CD4-positive, alpha-beta T cell (primary cell): ENCODE measurements at regions of chr7 and their contacts with region 1.

Region 1: GRCh38 chr7:35801392-35802101 is 690 bp downstream of the SEPTIN7 start:
- DNase-seq: peak; percentile 56 to 91 (median 72)
- ATAC-seq: peak; percentile 35
- H3K4me3 ChIP-seq: peak overlapping the region; percentile 84
- H3K4me3 Mint-ChIP-seq: peak overlapping the region; percentile 94
- H3K27ac ChIP-seq: peak overlapping the region; percentile 94 to 99
- H3K27ac Mint-ChIP-seq: peak overlapping the region; percentile 98
- H3K4me1 ChIP-seq: peaks cover 21% of the 10 kb centered on the region
- H3K4me1 Mint-ChIP-seq: peaks cover 55% of the 10 kb centered on the region
- H3K27me3 ChIP-seq: no peaks in the 10 kb centered on the region
- H3K27me3 Mint-ChIP-seq: no peaks in the 10 kb centered on the region
- CTCF ChIP-seq: peak; percentile 41

Region 2: GRCh38 chr7:35707422-35707821 is 94.1 kb before region 1 on chr7:
- CTCF ChIA-PET with region 1: interaction called, 8 read pairs
- POLR2A ChIA-PET with region 1: interaction called, 50 read pairs
- intact Hi-C with region 1: loop called (anchors 1 to 5 kb)
- DNase-seq: no peak
- ATAC-seq: no peak
- H3K4me3 ChIP-seq: no peak overlapping the region
- H3K4me3 Mint-ChIP-seq: no peak overlapping the region
- H3K27ac ChIP-seq: no peak overlapping the region
- H3K27ac Mint-ChIP-seq: no peak overlapping the region
- H3K4me1 ChIP-seq: peaks cover 13% of the 10 kb centered on the region
- H3K4me1 Mint-ChIP-seq: peaks cover 12% of the 10 kb centered on the region
- H3K27me3 ChIP-seq: no peaks in the 10 kb centered on the region
- H3K27me3 Mint-ChIP-seq: no peaks in the 10 kb centered on the region
- CTCF ChIP-seq: no peak

Region 3: GRCh38 chr7:35823440-35823839 is 21.9 kb after region 1 on chr7:
- CTCF ChIA-PET with region 1: interaction called, 7 read pairs
- POLR2A ChIA-PET with region 1: interaction called, 19 read pairs
- intact Hi-C with region 1: no loop called
- DNase-seq: no peak
- ATAC-seq: no peak
- H3K4me3 ChIP-seq: no peak overlapping the region
- H3K4me3 Mint-ChIP-seq: peak overlapping the region; percentile 32
- H3K27ac ChIP-seq: no peak overlapping the region
- H3K27ac Mint-ChIP-seq: no peak overlapping the region
- H3K4me1 ChIP-seq: peaks cover 8% of the 10 kb centered on the region
- H3K4me1 Mint-ChIP-seq: peaks cover 39% of the 10 kb centered on the region
- H3K27me3 ChIP-seq: no peaks in the 10 kb centered on the region
- H3K27me3 Mint-ChIP-seq: no peaks in the 10 kb centered on the region
- CTCF ChIP-seq: no peak

Region 4: DNA sequence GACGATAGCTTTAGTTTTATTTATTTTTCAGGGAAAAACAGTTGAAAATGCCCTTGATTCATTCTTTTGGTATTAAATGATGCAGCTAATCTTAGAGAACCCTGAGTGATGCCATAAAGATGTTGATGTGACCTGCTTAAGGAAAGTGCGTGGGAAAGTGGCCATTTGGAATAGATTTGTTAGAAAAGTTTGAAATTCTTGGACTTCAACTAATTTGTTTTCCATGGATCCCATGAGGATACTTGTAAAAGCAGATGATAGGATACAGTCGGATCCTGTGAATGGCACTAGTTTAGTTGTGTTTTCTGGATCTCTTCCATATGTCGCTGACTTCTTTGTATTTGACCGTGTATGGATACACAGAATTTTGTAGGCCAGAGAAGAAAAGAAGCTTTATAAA is 68.3 kb after region 1 on chr7:
- CTCF ChIA-PET with region 1: interaction called, 4 read pairs
- POLR2A ChIA-PET with region 1: interaction called, 3 read pairs
- intact Hi-C with region 1: loop called in 1 of 2 experiments (anchors 5 kb)
- DNase-seq: no peak
- ATAC-seq: no peak
- H3K4me3 ChIP-seq: no peak overlapping the region
- H3K4me3 Mint-ChIP-seq: no peak overlapping the region
- H3K27ac ChIP-seq: no peak overlapping the region
- H3K27ac Mint-ChIP-seq: no peak overlapping the region
- H3K4me1 ChIP-seq: no peaks in the 10 kb centered on the region
- H3K4me1 Mint-ChIP-seq: peaks cover 60% of the 10 kb centered on the region
- H3K27me3 ChIP-seq: no peaks in the 10 kb centered on the region
- H3K27me3 Mint-ChIP-seq: no peaks in the 10 kb centered on the region
- CTCF ChIP-seq: no peak

Region 5: GRCh38 chr7:35993676-35994606 is 192.4 kb after region 1 on chr7:
- CTCF ChIA-PET with region 1: no interaction called
- POLR2A ChIA-PET with region 1: no interaction called
- intact Hi-C with region 1: no loop called
- DNase-seq: no peak
- ATAC-seq: no peak
- H3K4me3 ChIP-seq: no peak overlapping the region
- H3K4me3 Mint-ChIP-seq: no peak overlapping the region
- H3K27ac ChIP-seq: no peak overlapping the region
- H3K27ac Mint-ChIP-seq: no peak overlapping the region
- H3K4me1 ChIP-seq: no peaks in the 10 kb centered on the region
- H3K4me1 Mint-ChIP-seq: no peaks in the 10 kb centered on the region
- H3K27me3 ChIP-seq: no peaks in the 10 kb centered on the region
- H3K27me3 Mint-ChIP-seq: no peaks in the 10 kb centered on the region
- CTCF ChIP-seq: no peak

Region 6: GRCh38 chr7:36291387-36292316 is 490.1 kb after region 1 on chr7:
- CTCF ChIA-PET with region 1: no interaction called
- POLR2A ChIA-PET with region 1: interaction called, 11 read pairs
- intact Hi-C with region 1: no loop called
- DNase-seq: peak; percentile 56 to 88 (median 70)
- ATAC-seq: peak; percentile 27
- H3K4me3 ChIP-seq: peak overlapping the region; percentile 26
- H3K4me3 Mint-ChIP-seq: peak overlapping the region; percentile 65
- H3K27ac ChIP-seq: no peak overlapping the region
- H3K27ac Mint-ChIP-seq: peak overlapping the region; percentile 59
- H3K4me1 ChIP-seq: peaks cover 45% of the 10 kb centered on the region
- H3K4me1 Mint-ChIP-seq: peaks cover 46% of the 10 kb centered on the region
- H3K27me3 ChIP-seq: no peaks in the 10 kb centered on the region
- H3K27me3 Mint-ChIP-seq: no peaks in the 10 kb centered on the region
- CTCF ChIP-seq: peak; percentile 96

Region 7: DNA sequence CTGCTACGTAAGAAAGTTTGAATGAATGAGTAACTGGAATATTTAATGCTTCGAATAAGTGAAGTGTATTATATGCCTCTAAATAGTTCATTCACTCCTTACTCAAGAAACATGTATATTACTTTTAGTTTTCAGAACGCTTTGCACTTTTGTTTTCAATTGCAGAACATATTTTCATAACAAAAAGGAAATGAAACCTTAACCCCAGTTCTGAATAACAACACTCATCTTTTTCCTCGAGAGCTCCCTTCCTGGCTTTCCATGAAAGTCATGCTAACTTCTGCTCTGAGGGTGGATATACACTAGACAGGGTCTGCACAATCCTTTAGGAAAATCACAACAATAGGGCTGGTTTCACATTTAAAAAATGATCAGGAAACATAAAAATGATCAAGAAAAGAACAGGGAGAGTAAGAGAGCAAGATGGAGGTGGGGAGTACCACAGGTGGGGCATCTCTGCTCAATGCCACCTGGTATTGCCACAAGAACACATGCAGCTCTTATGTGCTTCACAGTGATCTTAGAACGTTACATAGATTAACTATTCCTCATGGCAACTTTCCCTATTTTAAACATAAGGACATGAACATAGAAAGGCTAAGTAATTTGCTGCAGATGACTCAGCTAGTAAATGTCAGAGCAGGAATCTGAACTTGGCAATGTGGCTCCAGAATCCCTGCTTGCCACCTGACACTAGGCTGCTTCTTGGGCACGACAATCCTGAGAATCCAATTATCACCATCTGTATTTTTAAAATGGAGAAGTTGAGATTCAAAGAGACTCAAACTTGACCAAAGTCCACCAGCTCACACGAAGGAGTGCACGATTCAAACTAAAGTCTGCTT is 1142.3 kb after region 1 on chr7:
- CTCF ChIA-PET with region 1: no interaction called
- POLR2A ChIA-PET with region 1: no interaction called
- intact Hi-C with region 1: no loop called
- DNase-seq: no peak
- ATAC-seq: no peak
- H3K4me3 ChIP-seq: no peak overlapping the region
- H3K4me3 Mint-ChIP-seq: no peak overlapping the region
- H3K27ac ChIP-seq: no peak overlapping the region
- H3K27ac Mint-ChIP-seq: peak overlapping the region; percentile 43
- H3K4me1 ChIP-seq: peaks cover 10% of the 10 kb centered on the region
- H3K4me1 Mint-ChIP-seq: peaks cover 66% of the 10 kb centered on the region
- H3K27me3 ChIP-seq: no peaks in the 10 kb centered on the region
- H3K27me3 Mint-ChIP-seq: no peaks in the 10 kb centered on the region
- CTCF ChIP-seq: no peak